ENCODE measurements at regions of chr17 and their contacts with region 1.

Region 1: DNA sequence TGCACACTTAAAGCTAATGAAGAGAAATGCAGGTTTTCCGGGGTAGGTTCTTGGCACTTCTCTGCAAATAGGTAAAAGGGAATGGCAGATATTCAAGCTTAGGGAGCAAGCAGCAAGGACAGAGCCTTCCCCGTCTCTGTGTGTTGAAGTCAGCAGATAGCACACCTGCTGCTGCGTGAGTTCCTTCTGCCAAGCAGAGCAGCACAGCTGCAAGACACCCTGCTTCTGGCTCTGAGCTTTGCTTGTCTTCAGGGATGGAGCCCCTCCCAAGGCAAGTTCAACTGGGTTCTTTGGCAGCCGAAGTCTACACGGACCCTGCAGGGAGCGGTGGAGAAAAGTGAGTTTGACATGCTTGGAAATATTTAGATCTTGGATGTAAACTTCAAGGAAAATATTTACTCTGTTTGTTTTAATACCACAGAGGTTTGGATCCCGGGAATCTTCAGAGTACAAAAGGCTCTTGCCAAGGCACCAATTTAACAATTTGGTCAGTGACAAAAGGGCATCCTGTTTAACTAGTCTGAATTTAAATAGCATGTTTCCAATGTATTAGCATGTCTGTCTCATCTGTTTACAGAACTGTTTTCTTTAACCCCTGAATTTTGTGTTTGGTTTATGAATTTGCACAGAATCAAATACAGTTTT is 113.4 kb upstream of the KCNJ16 start:
- ATAC-seq: peak in 2 of 8 experiments; percentile 18 to 26
- H3K4me3 ChIP-seq: no peak overlapping the region
- H3K27ac ChIP-seq: no peak overlapping the region
- H3K4me1 ChIP-seq: peaks cover 3 to 10% of the 10 kb centered on the region in 2 donors

Region 2: DNA sequence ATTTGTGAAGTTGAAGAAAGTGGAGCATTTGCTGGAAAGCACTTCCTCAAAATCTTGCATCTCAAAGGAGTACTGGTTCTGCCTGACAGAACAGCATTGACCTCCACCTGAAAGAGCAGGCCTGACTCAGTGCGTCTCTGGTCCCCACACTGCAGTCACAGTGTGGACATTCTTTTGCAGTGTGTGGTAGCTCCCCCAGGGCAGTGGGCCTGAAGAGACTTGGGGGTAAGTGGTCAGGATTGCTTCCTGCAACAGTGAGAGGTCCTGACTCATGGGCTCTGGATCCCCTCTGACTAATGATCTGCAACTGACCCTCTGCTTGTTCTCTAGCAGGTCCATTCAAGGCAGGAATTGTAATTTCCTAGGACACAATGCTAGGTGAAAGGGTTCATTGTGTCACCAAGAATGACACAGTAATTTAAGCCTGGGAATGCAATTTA is 91.5 kb before region 1 on chr17:
- in situ Hi-C with region 1: loop called in 1 of 9 experiments (anchors 25 kb)
- ATAC-seq: peak in 2 of 8 experiments; percentile 21 to 43
- H3K4me3 ChIP-seq: no peak overlapping the region
- H3K27ac ChIP-seq: no peak overlapping the region
- H3K4me1 ChIP-seq: peaks cover 4 to 18% of the 10 kb centered on the region in 2 donors

Measured in motor neuron (in vitro differentiated cells).